Activated naive CD4-positive, alpha-beta T cell treated with anti-CD3 and anti-CD28 coated beads for 36 hours (primary cell): ENCODE measurements at regions of chr17 and their contacts with region 1.

Region 1: DNA sequence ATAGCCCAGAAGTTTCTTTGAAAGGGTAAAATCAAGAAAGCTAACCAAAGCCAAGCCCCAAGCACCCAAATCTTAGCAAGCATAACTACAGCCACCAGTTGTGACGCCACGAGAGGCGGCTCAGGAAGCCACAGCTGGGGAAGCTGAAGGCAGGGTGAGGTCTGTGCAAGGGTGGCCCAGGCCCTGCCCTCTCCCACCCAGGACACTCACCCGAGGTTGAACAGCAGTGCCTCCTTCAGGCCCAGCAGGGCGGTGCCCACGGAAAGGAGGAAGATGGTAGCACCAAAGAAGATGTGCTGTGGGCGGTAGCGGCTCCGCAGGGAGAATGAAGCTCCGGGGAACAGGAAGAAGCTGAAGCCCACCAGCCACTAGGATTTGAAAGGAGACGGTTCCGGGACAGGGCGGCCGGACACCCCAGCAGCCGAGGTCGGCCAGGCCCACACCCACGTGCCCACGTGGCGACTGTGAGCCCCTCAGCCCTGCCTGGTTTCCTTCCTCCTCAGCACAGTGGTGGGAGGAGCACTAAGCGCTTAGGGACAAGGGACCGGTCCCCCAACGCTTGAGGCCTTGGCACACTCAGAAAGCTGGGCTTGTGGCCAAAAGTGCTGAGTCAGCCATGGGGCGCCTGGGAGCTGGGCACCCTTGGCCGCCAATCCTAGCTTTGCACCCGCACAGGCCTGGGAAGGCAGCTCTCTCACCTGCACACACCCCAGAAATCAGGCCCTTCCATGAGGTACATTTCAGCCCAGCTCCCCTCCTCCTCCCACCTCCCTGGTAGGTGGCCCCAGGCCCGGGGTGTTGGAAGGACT is 11.0 kb downstream of the CYB561 start:
- DNase-seq: peak; percentile 28
- H3K4me3 Mint-ChIP-seq: no peak overlapping the region
- H3K27ac Mint-ChIP-seq: no peak overlapping the region
- H3K4me1 Mint-ChIP-seq: peaks cover 17% of the 10 kb centered on the region
- H3K27me3 Mint-ChIP-seq: no peaks in the 10 kb centered on the region

Region 2: GRCh38 chr17:63399856-63400255 is 35.2 kb before region 1 on chr17:
- CTCF ChIA-PET with region 1: no interaction called
- intact Hi-C with region 1: no loop called
- DNase-seq: no peak
- H3K4me3 Mint-ChIP-seq: no peak overlapping the region
- H3K27ac Mint-ChIP-seq: no peak overlapping the region
- H3K4me1 Mint-ChIP-seq: no peaks in the 10 kb centered on the region
- H3K27me3 Mint-ChIP-seq: no peaks in the 10 kb centered on the region

Region 3: DNA sequence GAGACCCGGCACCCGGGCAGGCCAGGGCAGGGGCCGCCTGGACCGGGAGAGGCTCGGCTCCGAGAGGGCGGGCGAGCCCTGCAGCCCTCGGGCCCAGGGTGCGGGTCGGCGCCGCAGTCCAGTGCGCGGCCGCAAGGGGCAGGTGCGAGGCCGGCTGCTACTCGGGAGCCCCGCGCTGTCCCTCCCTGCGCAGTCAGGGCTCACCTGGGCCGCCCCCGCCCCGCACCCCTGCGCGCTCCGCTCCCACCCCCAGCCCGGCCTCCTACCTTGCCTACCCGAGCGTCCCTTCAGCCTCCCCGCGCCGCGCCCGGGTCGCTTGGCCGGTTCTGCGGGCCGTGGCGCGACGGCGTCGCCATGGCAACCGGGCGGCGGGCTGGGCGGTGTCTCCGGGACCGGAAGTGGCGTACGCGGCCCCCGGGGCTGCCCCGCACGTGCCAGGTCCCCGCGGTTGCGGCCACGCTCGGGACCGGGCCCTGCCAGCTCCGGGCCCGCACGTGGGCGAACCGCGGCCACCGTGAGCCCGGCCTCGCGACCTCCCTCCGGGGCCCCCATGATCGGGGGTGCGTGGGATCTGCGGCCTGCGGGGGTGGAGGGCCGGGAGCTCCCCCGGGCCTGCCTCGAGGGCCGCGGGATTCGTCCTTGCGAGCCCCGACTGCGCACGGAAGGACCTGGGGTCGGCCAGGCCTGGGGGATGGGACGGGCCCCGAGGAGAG is 11.1 kb after region 1 on chr17 and contains the start of gene CYB561:
- CTCF ChIA-PET with region 1: interaction called, 15 read pairs
- intact Hi-C with region 1: no loop called
- DNase-seq: peak; percentile 66
- H3K4me3 Mint-ChIP-seq: peak within 1 kb of the TSS; percentile 67
- H3K27ac Mint-ChIP-seq: peak within 1 kb of the TSS; percentile 79
- H3K4me1 Mint-ChIP-seq: peaks cover 23% of the 10 kb centered on the region
- H3K27me3 Mint-ChIP-seq: no peaks in the 10 kb centered on the region
- total RNA-seq, gene CYB561: 2.3 to 2.6 TPM